Cardiac septum (tissue), 1 donor: ENCODE measurements at regions of chr10 and their contacts with region 1.

Region 1: GRCh38 chr10:22615819-22616499 is 98.4 kb downstream of the PIP4K2A start:
- DNase-seq: peak; percentile 88

Region 2: GRCh38 chr10:22655311-22655981 is 39.5 kb after region 1 on chr10:
- intact Hi-C with region 1: loop called (anchors 5 kb)
- DNase-seq: no peak

Region 3: DNA sequence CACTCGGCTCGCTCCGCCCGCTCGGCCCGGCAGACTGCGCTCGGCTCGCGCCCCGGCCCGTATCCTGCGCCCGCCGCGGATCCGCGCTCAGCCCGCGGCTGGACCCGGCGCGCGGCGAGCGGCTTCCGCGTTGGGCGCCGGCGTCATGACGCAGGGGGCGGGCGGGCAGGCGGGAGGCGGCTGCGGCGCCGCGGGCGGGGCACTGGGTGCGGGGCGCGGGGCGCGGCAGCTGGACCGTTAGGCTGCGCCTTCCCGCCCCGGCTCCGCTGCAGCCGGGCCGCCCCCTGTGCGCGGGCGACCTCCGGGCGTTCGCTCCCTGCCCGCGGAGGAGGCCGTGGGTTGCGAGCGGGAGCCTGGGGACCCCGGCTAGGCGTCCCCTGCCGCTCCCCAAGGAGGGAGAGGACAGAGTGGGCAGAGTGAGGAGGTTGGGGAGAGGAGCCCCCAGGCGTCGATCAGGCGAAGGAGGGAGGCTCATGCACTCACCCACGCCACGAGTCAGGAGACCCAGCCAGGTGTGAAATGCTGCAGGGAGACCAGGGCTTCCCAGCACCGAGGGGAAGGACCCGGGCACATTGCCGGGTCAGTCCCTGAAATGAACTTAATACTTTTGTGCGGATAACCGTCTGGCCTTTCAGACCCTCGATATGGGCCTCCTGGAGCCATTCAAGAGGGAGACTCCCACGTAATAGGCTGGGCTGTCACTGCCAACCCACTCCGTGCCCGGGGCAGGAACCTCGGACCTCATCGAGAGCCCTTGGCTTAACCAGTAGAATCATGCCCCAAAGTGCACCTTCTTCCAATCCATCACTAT is 98.7 kb after region 1 on chr10 and contains the start of gene PIP4K2A:
- intact Hi-C with region 1: loop called (anchors 10 kb)
- DNase-seq: peak; percentile 92
- total RNA-seq, gene PIP4K2A: 20.0 TPM

Region 4: DNA sequence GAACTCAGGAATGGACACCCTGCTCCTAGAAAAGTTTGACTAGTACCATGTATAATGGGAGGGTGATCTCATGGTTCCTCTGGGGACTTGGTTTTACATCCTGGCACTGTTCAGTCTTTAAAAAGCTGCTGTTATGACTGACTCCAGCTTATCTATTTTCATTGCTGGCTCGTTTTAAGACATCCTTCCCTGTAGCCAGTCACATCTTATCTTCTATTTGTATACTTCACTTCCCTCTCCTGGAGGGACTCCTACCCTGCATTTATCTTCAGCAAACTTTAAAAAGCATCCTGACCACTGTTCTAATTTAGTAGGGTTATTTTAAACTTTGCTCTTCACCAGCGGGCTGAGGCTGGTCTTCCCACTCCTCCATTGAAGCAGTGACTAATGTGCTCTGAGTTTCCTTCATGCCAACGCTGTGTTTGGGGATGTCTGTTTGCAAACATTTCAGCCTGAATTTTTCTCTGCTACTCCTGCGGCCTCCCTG is 239.0 kb after region 1 on chr10:
- intact Hi-C with region 1: loop called (anchors 5 kb)
- DNase-seq: no peak

Region 5: GRCh38 chr10:22988581-22989360 is 372.8 kb after region 1 on chr10:
- intact Hi-C with region 1: loop called (anchors 5 kb)
- DNase-seq: no peak